MCF 10A (cell line): ENCODE measurements at regions of chr10 and their contacts with region 1.

Region 1: DNA sequence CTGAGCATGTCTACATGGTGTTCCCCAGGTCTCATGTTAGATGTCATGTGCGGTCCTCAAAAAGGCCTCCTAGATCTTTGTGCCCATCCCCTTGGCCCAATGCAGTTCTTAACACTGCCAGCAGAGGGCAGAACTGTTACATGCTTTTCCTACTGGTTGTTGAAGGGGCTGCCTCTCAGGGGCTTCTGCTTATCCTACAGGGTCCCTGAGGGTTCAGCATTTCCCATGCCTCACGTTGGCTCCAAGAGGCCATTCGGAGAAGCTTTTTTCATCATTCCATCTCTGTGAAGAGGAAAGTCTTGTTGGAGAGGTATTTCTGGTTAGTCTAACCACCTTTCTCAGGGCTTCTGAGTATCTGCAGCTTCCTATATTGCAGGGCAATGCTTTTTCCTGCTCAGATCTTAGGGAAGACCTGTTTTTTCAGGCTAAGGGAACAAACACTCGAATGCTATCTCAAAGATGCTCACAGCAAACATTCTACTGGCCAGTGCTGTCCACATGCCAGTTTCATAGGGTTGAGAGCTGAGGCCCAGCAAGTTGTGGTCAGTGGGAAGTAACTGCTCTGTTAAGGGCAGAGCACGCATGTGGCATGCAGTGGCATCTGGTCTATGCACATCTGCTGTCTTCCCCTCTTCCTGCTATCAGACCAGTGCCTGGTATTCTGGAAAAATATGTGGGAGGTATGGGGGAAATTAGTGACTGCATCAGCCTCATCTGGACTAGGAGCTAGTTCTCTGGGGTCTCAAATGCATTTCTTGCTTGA is 31.5 kb downstream of the MBL2 start:
- DNase-seq: peak; percentile 64
- H3K4me3 Mint-ChIP-seq: no peak overlapping the region
- H3K27ac Mint-ChIP-seq: no peak overlapping the region
- H3K4me1 Mint-ChIP-seq: peaks cover 6% of the 10 kb centered on the region
- H3K27me3 Mint-ChIP-seq: no peaks in the 10 kb centered on the region
- CTCF ChIP-seq: peak; percentile 86

Region 2: DNA sequence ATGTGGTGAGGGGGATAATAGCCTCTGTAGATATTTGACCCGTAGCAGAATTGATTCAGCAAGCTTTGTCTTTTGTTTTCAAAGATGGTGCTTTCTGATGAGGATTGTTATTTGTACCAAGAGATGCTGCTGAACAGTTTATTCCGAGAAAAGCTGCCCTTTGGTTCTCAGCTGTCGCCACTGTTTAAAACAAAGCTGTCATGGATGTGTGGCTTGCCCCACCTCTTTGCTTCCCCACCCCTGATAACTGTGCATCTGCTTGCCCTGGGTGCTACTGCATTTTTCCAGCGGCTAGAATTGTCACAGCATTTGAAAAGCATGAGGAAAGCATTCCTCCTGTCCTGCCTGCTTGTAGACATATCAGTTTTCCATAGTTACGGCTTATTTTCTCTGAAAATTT is 814.8 kb before region 1 on chr10:
- CTCF ChIA-PET with region 1: no interaction called
- POLR2A ChIA-PET with region 1: no interaction called
- intact Hi-C with region 1: no loop called
- DNase-seq: no peak
- H3K4me3 Mint-ChIP-seq: no peak overlapping the region
- H3K27ac Mint-ChIP-seq: no peak overlapping the region
- H3K4me1 Mint-ChIP-seq: no peaks in the 10 kb centered on the region
- H3K27me3 Mint-ChIP-seq: peaks cover 42% of the 10 kb centered on the region
- CTCF ChIP-seq: no peak

Region 3: DNA sequence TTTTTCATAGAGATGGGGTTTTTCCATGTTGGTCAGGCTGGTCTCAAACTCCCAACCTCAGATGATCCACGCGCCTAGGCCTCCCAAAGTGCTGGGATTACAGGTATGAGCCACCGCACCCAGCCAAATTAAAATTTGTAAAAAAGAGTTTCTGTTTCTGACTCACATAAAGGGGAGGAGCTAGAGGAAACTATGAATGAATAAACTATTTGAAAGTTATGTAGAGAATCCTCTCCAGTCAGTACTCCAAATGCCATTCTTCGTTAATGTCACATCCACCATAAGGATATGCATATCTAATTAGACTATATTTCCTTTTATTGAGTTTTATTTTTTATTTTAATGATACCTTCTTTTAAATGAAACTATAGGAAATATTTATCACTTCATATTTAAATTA is 21.1 kb before region 1 on chr10:
- CTCF ChIA-PET with region 1: interaction called, 17 read pairs
- POLR2A ChIA-PET with region 1: no interaction called
- intact Hi-C with region 1: no loop called
- DNase-seq: no peak
- H3K4me3 Mint-ChIP-seq: no peak overlapping the region
- H3K27ac Mint-ChIP-seq: no peak overlapping the region
- H3K4me1 Mint-ChIP-seq: no peaks in the 10 kb centered on the region
- H3K27me3 Mint-ChIP-seq: no peaks in the 10 kb centered on the region
- CTCF ChIP-seq: no peak

Region 4: GRCh38 chr10:52729271-52730104 is 11.6 kb before region 1 on chr10:
- CTCF ChIA-PET with region 1: interaction called, 22 read pairs
- POLR2A ChIA-PET with region 1: no interaction called
- intact Hi-C with region 1: no loop called
- DNase-seq: peak; percentile 50
- H3K4me3 Mint-ChIP-seq: no peak overlapping the region
- H3K27ac Mint-ChIP-seq: no peak overlapping the region
- H3K4me1 Mint-ChIP-seq: no peaks in the 10 kb centered on the region
- H3K27me3 Mint-ChIP-seq: no peaks in the 10 kb centered on the region
- CTCF ChIP-seq: peak; percentile 58

Region 5: GRCh38 chr10:52755297-52756062 is 14.4 kb after region 1 on chr10:
- CTCF ChIA-PET with region 1: interaction called, 41 read pairs
- POLR2A ChIA-PET with region 1: interaction called, 4 read pairs
- intact Hi-C with region 1: no loop called
- DNase-seq: peak; percentile 65
- H3K4me3 Mint-ChIP-seq: no peak overlapping the region
- H3K27ac Mint-ChIP-seq: no peak overlapping the region
- H3K4me1 Mint-ChIP-seq: peaks cover 7% of the 10 kb centered on the region
- H3K27me3 Mint-ChIP-seq: no peaks in the 10 kb centered on the region
- CTCF ChIP-seq: no peak

Region 6: DNA sequence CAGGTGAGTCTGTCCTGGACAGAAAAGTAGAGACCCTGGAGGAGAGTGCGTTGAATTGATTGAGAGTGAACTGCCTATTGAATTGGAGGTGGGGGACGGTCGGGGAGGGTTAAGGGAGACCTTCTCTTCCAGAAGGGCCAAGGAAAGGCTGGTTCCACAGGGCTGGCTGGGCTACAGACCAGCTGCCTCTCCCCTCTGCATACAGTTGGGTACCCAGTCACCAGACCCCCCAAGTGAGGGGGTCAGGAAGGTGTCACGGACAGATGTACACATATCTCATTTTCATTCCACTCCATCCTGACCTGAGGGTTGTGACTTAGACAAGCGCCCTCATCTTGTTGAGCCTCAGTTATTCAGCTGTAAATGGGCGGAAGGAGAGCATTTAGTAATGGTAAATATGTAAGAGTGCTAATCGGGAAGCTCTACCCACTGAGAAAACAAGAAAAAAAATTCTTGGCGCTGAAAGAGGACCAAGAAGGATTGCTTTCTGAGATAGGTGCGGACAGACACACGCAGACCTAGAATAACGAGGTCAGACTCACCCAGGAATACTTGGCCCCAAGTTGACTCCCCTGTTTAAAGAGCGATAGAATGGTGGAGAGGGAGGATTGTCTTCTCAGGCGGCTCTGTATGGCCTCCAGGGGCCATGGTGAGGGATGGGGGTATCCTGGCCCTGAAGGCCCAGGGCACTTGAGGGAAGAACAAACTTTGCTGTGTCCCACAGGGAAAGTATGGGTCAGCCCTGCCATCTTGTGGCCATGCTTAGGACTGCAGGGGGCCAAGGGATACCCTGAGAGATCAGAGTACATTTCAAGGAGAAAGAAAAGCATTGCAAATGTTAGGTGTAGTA is 38.7 kb after region 1 on chr10:
- CTCF ChIA-PET with region 1: interaction called, 459 read pairs
- POLR2A ChIA-PET with region 1: interaction called, 5 read pairs
- intact Hi-C with region 1: loop called (anchors 1 kb)
- DNase-seq: peak; percentile 70
- H3K4me3 Mint-ChIP-seq: no peak overlapping the region
- H3K27ac Mint-ChIP-seq: no peak overlapping the region
- H3K4me1 Mint-ChIP-seq: no peaks in the 10 kb centered on the region
- H3K27me3 Mint-ChIP-seq: no peaks in the 10 kb centered on the region
- CTCF ChIP-seq: peak; percentile 95

Region 7: DNA sequence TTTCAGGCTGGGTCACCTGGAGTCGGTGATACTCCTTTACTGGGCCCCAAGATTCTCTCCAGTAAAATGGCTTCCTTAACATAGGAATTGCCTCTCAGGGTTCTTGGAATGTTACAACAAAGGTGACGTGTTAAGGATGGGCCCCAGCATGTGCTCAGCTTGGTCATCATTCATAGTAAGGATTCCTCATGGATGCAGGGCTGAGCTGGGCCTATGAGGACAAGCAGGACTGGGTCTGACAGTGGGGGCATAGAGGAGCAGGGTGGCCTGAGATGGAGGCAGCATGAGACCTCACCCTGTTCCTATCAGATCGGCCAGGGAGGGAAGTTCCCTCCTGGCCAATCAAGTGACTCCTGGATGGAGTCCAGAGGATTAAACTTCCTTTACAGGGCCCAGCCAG is 44.3 kb after region 1 on chr10:
- CTCF ChIA-PET with region 1: interaction called, 459 read pairs
- POLR2A ChIA-PET with region 1: interaction called, 5 read pairs
- intact Hi-C with region 1: loop called (anchors 1 kb)
- DNase-seq: no peak
- H3K4me3 Mint-ChIP-seq: no peak overlapping the region
- H3K27ac Mint-ChIP-seq: no peak overlapping the region
- H3K4me1 Mint-ChIP-seq: no peaks in the 10 kb centered on the region
- H3K27me3 Mint-ChIP-seq: no peaks in the 10 kb centered on the region
- CTCF ChIP-seq: no peak